PC-9 (cell line): ENCODE measurements at regions of chr15 and their contacts with region 1.

Region 1: GRCh38 chr15:74540761-74541493 is at the start of gene ARID3B:
- DNase-seq: peak; percentile 92 to 94
- H3K4me3 ChIP-seq: peak within 1 kb of the TSS; percentile 98
- H3K27ac ChIP-seq: peak within 1 kb of the TSS; percentile 52
- H3K4me1 ChIP-seq: peaks cover 13% of the 10 kb centered on the region
- H3K27me3 ChIP-seq: no peaks in the 10 kb centered on the region
- CTCF ChIP-seq: no peak
- total RNA-seq, gene ARID3B: 9.6 and 10.8 TPM in 2 replicates

Region 2: DNA sequence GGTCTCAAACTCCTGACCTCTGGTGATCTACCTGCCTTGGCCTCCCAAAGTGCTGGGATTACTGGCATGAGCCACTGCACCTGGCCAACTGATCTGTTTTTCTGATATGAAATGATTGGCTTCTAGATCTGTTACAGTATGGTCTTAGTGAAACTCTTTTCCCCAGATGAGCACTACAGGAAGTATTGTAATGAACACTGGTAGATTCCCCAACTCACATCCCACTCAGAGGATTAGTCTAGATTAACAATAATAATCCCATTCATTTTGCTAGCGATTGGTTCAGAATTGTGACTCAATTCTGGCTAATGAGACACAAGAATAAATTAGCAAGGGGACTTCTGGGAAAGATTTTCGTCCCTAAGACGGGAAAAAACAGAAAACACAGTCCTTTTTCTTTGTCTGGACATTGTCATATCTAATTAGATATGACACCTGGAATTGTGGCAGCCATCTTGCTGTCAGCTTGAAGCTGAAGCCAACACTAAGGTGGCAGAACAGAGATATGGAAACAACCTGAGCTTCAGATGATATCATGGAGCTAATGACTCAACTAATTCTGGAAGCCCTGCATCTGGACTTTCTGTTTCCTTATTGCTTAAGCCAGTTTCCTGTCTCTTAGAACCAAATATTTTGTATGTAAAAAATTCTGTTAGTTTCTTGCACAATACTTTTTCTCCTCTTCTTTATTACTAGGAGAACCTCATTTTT is 890.4 kb before region 1 on chr15:
- CTCF ChIA-PET with region 1: no interaction called
- POLR2A ChIA-PET with region 1: interaction called, 10 read pairs
- intact Hi-C with region 1: no loop called
- DNase-seq: peak in 1 of 2 experiments; percentile 43
- H3K4me3 ChIP-seq: no peak overlapping the region
- H3K27ac ChIP-seq: no peak overlapping the region
- H3K4me1 ChIP-seq: peaks cover 33% of the 10 kb centered on the region
- H3K27me3 ChIP-seq: no peaks in the 10 kb centered on the region
- CTCF ChIP-seq: no peak

Region 3: DNA sequence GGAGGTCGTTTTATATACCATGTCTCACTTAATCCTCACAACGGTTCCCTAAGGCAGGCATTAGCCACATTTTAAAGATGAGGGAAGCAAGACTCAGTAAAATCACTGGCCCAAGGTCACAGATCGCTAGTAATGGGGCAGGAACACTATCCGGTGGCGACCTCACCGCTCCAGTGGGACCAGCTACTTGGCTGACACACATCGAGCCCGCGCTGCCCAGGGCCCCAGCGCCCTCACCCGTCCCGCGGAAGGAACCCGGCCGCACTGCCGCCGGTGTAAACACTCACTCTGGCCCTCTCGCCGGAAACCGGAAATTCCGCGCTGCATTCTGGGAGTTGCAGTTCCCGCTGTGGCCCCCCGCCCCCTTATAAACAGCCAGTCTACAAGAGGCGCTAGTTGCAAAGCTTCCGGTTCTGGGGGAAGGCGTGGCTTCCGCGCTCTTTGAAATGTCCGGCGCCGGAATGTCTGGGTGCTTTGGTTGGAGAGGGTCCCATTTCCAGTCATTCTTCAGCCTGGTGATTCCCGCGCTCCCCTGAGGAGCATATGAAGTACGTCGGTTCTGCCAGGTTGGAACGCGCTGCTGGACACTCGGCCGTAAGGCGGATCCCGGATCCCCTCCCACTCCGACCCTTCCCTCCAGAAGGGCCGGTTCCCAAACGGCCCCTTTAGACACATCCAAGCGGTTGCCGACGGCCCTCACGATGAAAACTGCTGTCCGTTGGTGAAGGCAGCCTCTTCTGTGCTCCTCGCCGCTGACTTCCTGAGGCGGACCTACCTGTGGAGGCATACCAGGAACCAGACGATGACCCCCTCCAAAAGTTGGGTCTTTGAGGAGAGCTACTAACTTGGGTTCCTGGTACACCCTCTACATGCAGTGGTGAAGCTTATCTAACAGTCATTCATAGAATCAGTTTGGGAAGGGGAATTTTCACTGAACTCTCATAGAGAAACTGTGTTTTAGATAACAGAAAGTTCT is 79.8 kb before region 1 on chr15 and contains the start of gene UBL7:
- CTCF ChIA-PET with region 1: no interaction called
- POLR2A ChIA-PET with region 1: no interaction called
- intact Hi-C with region 1: loop called (anchors 1 kb)
- DNase-seq: peak; percentile 90 to 95
- H3K4me3 ChIP-seq: peak within 1 kb of the TSS; percentile 73
- H3K27ac ChIP-seq: peak within 1 kb of the TSS; percentile 41
- H3K4me1 ChIP-seq: 0 out of 2 replicates have a peak, but pooled peaks cover 7% of the 10 kb centered on the region
- H3K27me3 ChIP-seq: no peaks in the 10 kb centered on the region
- CTCF ChIP-seq: no peak
- total RNA-seq, gene UBL7: 73.9 and 89.6 TPM in 2 replicates

Region 4: DNA sequence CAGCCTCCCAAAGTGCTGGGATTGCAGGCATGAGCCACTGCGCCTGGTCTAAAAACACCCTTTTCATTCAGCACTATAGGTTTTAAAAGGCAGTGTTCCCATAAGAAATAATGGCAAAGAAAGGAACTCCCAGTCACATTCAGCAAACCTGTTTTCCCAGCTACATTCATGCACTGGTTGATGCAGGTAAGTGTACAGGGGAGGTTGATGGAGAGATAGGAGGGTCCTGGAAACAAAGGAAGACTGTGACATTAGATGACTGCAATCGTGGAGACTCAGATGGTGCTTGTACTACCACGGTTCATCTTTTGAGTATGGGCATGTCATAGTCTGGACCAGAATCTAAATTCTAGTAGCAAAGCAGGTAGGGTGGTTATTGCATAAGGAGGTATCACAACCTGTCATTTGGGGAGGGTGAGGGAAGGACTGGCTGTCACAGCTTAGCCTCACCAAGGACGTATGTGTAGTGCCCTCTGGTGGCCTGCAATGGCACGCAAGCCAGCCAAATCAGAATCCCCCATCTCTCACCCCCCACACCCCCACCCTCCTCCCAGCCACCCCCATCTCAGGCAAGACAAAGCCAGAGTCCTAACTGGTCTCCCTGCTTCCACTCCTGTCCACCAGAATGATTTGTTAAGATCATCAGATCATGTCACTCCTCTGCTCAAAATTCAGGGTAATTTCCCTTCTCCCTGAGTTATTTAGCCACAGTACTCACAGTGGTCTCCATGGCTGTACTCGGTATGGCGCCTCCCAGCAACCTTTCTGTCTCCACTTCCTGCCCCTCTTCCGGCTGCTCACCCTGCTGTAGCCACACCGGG is 51.2 kb before region 1 on chr15:
- CTCF ChIA-PET with region 1: no interaction called
- POLR2A ChIA-PET with region 1: no interaction called
- intact Hi-C with region 1: loop called (anchors 1 kb)
- DNase-seq: peak; percentile 48 to 57
- H3K4me3 ChIP-seq: no peak overlapping the region
- H3K27ac ChIP-seq: no peak overlapping the region
- H3K4me1 ChIP-seq: no peaks in the 10 kb centered on the region
- H3K27me3 ChIP-seq: no peaks in the 10 kb centered on the region
- CTCF ChIP-seq: peak; percentile 66

Region 5: DNA sequence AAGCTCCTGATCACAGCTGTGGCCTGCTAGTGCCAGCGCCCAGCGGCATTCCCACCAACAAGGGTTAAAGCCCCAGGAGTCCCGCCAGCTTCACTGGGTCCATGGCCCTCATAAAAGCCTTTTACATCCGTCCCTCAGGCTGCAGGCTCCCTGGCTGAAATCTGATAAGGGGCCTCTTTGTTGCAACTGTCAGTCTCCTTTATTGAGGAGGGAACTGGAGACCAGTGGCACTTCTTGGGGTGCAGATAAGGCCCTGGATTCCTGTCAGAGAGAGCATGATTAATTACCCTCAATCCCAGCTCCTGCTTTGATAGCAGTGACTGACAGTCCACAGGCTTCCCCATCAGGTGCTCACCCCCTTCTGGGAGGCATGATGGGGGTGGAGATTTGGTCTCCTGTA is 43.9 kb after region 1 on chr15:
- CTCF ChIA-PET with region 1: interaction called, 3 read pairs
- POLR2A ChIA-PET with region 1: no interaction called
- intact Hi-C with region 1: loop called (anchors 5 kb)
- DNase-seq: no peak
- H3K4me3 ChIP-seq: no peak overlapping the region
- H3K27ac ChIP-seq: no peak overlapping the region
- H3K4me1 ChIP-seq: peaks cover 14% of the 10 kb centered on the region
- H3K27me3 ChIP-seq: no peaks in the 10 kb centered on the region
- CTCF ChIP-seq: no peak

Region 6: DNA sequence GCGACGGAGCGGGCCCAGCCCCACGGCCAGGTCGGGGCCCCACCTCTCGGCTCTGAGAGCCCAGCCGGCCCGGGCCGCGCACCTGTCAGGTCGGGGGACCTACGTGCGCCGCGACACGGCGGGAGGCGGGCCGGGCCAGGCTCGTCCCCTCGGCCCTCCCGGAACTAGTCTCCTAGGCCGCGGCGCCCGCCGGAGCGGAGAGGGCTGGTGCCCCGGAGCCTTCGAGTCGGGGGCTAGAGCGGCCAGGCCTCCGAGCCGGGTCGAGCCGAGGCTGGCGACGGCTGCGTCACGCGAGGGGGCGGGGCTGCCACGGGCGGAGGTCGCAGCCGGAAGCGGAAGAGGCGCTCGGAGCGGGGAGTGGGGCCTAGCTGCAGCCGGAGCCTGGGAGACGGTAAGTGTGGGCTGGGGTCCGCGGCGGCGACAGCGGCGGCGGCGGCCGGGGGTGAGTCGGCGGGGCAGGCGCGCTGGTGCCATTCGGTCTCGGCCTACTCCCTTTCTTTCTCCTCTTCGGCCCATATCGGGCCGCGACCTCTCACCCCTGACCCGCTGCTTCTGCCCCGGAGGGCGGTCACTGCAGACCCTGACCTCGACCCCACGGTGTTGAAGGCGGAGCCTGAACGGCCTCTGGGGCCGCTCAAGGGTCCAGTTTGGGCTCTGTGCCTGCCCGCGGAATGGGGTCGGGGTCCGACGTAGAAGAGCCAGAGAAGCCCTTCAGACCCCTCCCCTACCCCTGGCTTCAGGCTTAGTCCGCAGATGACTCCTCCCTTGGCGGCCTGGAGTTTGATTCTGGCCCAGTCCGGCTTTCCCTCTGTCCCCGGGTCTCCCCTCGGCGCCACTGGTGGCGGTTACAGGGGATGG is 74.8 kb after region 1 on chr15 and contains the start of gene CLK3:
- CTCF ChIA-PET with region 1: no interaction called
- POLR2A ChIA-PET with region 1: interaction called, 5 read pairs
- intact Hi-C with region 1: loop called (anchors 2 kb)
- DNase-seq: peak; percentile 84 to 97
- H3K4me3 ChIP-seq: peak within 1 kb of the TSS; percentile 87
- H3K27ac ChIP-seq: peak within 1 kb of the TSS; percentile 77
- H3K4me1 ChIP-seq: peaks cover 18% of the 10 kb centered on the region
- H3K27me3 ChIP-seq: 0 out of 2 replicates have a peak, but pooled peaks cover 2% of the 10 kb centered on the region
- CTCF ChIP-seq: no peak
- total RNA-seq, gene CLK3: 70.7 and 80.1 TPM in 2 replicates

Region 7: GRCh38 chr15:74642729-74643367 is 101.9 kb after region 1 on chr15:
- CTCF ChIA-PET with region 1: no interaction called
- POLR2A ChIA-PET with region 1: no interaction called
- intact Hi-C with region 1: no loop called
- DNase-seq: no peak
- H3K4me3 ChIP-seq: peak overlapping the region; percentile 21; the same call in 1 of the 2 replicates
- H3K27ac ChIP-seq: peak overlapping the region; percentile 72
- H3K4me1 ChIP-seq: peaks cover 24% of the 10 kb centered on the region
- H3K27me3 ChIP-seq: no peaks in the 10 kb centered on the region
- CTCF ChIP-seq: no peak